ENCODE measurements at regions of chr12 and their contacts with region 1.

Region 1: GRCh38 chr12:47837190-47838171 is 17.8 kb upstream of the HDAC7 start:
- DNase-seq: peak in 9 of 10 donors; percentile 60 to 79 (median 65)
- H3K4me3 ChIP-seq: no peak overlapping the region
- H3K27ac ChIP-seq: peak overlapping the region in 4 of 59 donors; percentile 20 to 51 (median 40)
- H3K27me3 ChIP-seq: no peaks in the 10 kb centered on the region
- CTCF ChIP-seq: peak; percentile 84 to 99 (median 93)

Region 2: GRCh38 chr12:47651368-47652254 is 185.9 kb before region 1 on chr12:
- intact Hi-C with region 1: loop called (anchors 5 kb)
- DNase-seq: peak; percentile 23 to 79 (median 62)
- H3K4me3 ChIP-seq: peak overlapping the region in 40 of 59 donors; percentile 2 to 57 (median 33)
- H3K27ac ChIP-seq: peak overlapping the region in 39 of 59 donors; percentile 2 to 71 (median 47)
- H3K27me3 ChIP-seq: no peaks in the 10 kb centered on the region
- CTCF ChIP-seq: peak; percentile 64 to 92 (median 81)

Region 3: GRCh38 chr12:47797441-47797840 is 40.0 kb before region 1 on chr12:
- intact Hi-C with region 1: loop called (anchors 1 to 5 kb)
- DNase-seq: peak in 4 of 10 donors; percentile 52 to 75 (median 58)
- H3K4me3 ChIP-seq: no peak overlapping the region
- H3K27ac ChIP-seq: peak overlapping the region in 4 of 59 donors; percentile 4 to 56 (median 16)
- H3K27me3 ChIP-seq: no peaks in the 10 kb centered on the region
- CTCF ChIP-seq: peak in 54 of 56 donors; percentile 36 to 74 (median 60)

Region 4: GRCh38 chr12:47819896-47820630 is 17.4 kb before region 1 on chr12 and contains the start of gene HDAC7:
- intact Hi-C with region 1: loop called in 1 of 2 experiments (anchors 1 kb)
- DNase-seq: peak; percentile 63 to 84 (median 71)
- H3K4me3 ChIP-seq: peak within 1 kb of the TSS; percentile 55 to 79 (median 69)
- H3K27ac ChIP-seq: peak within 1 kb of the TSS; percentile 50 to 98 (median 94)
- H3K27me3 ChIP-seq: no peaks in the 10 kb centered on the region
- CTCF ChIP-seq: peak in 14 of 56 donors; percentile 2 to 42 (median 18)
- total RNA-seq, gene HDAC7: 25.9 to 77.6 (median 46.8) TPM